ENCODE measurements at regions of chr4 and their contacts with region 1.

Region 1: DNA sequence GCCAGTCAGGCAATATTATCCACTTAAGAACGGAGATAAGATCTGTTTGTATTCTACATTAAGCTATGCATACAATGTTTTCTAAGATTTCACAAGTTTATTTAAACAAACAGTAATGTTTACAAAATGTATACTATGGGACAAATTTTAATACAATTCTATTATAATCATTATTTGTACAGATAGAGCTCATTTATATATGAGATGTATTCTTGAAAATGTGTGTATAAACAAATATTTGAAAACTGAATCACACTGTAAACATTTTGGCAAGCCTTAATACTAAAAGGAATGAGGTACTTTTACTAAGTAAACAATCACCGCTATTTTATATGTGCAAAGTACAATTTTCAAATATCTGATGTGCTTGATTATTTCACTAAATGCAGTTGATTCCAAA is 119.2 kb upstream of the MAB21L2 start:
- DNase-seq: peak; percentile 73
- ATAC-seq: peak; percentile 83
- H3K4me3 ChIP-seq: no peak overlapping the region; the same call in 1 of the 2 replicates
- H3K27ac ChIP-seq: no peak overlapping the region
- H3K4me1 ChIP-seq: peaks cover 20% of the 10 kb centered on the region
- H3K27me3 ChIP-seq: no peaks in the 10 kb centered on the region
- CTCF ChIP-seq: no peak

Region 2: DNA sequence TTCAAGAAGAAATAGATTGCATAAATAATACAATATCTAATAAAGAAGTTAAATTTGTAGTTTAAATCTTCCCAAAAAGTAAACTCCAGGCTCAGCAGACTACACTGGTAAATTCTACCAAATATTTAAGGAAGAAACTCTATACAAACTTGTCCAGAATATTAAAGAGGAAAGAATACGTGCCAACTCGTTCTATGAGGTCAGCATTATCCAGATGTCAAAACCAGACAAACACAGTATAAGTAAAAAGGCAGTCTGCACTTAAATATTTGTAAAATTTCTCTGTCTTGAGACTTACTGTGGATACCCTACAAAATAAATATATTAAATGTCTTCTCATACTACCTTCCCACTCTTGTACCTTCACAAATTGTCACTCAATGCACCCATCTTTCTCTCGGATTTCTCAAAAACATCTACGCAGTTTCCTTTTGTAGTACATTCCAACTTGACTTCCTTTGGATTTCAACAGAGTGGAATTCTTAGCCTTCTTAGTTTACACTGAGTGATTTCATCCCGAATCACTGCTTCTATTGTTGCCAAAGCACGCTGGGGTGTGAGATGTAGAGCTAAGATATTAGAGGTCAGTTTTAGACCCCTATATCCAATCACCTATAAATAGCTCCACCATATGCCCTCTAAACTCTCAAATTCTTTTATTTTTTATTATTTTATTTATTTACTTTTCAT is 47.6 kb after region 1 on chr4:
- CTCF ChIA-PET with region 1: no interaction called
- POLR2A ChIA-PET with region 1: no interaction called
- intact Hi-C with region 1: loop called (anchors 1 kb)
- DNase-seq: peak; percentile 65
- ATAC-seq: peak; percentile 87
- H3K4me3 ChIP-seq: peak overlapping the region; percentile 57
- H3K27ac ChIP-seq: peak overlapping the region; percentile 72
- H3K4me1 ChIP-seq: peaks cover 21% of the 10 kb centered on the region
- H3K27me3 ChIP-seq: no peaks in the 10 kb centered on the region
- CTCF ChIP-seq: no peak

Region 3: GRCh38 chr4:150593996-150594395 is 131.3 kb after region 1 on chr4:
- CTCF ChIA-PET with region 1: no interaction called
- POLR2A ChIA-PET with region 1: no interaction called
- intact Hi-C with region 1: loop called (anchors 1 kb)
- DNase-seq: peak; percentile 25
- ATAC-seq: peak; percentile 51
- H3K4me3 ChIP-seq: no peak overlapping the region
- H3K27ac ChIP-seq: no peak overlapping the region
- H3K4me1 ChIP-seq: no peaks in the 10 kb centered on the region
- H3K27me3 ChIP-seq: no peaks in the 10 kb centered on the region
- CTCF ChIP-seq: peak; percentile 52